SK-N-SH (cell line): ENCODE measurements at regions of chr2 and their contacts with region 1.

Region 1: DNA sequence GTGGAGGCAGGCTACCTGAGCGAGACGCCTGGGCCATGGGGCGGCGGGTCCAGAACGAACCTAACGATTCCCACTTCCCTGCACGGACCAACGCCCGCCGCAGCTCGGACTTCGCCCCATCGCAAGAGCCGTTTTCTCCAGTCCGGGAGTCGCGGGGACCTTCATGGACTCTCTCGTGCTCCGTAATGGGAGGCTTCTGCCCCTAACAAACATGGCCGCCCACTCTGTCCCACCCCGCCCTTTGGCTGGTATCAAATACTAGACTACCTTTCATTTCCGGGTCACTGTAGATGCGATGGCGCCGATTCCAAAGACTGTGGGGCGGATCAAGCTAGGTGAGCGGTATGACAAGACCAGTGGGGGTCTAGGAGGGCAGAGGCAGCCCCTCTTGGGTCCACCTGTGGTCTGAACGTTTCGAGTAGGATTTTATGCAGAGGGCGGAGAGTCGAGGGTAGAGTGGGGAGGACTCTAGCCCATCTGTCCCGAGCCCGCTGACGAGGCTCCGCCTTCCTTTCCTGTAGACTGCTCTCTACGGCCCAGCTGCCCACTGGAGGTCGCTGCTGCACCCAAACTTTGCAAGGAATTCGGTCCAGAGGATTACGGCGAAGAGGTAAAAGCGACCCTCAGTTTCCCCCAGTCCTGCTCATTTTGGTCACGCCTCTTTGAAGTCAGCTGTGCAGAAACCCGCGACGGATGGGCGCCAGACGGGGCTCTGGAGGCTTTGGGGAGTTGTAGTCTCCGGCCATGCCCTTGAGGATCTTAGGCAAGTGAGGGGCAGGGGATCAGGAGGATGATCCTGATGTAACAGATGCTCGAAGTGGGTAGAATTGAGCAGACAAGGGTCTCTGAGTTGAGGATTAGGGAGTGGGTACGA is at the starts of genes CCDC142 and TTC31:
- DNase-seq: peak; percentile 93
- H3K4me3 ChIP-seq: peak within 1 kb of the TSS; percentile 70 to 97
- H3K27ac ChIP-seq: peak within 1 kb of the TSS; percentile 79 to 91
- H3K4me1 ChIP-seq: peaks cover 13 to 16% of the 10 kb centered on the region in 2 experiments; a peak in 3 of 4 replicates
- H3K27me3 ChIP-seq: no peaks in the 10 kb centered on the region
- CTCF ChIP-seq: peak; percentile 93
- EP300 ChIP-seq: no peak
- RAD21 ChIP-seq: peak; percentile 84
- polyA plus RNA-seq, gene CCDC142: 8.7 and 13.1 TPM in 2 replicates
- polyA plus RNA-seq, gene TTC31: 27.9 and 38.0 TPM in 2 replicates

Region 2: DNA sequence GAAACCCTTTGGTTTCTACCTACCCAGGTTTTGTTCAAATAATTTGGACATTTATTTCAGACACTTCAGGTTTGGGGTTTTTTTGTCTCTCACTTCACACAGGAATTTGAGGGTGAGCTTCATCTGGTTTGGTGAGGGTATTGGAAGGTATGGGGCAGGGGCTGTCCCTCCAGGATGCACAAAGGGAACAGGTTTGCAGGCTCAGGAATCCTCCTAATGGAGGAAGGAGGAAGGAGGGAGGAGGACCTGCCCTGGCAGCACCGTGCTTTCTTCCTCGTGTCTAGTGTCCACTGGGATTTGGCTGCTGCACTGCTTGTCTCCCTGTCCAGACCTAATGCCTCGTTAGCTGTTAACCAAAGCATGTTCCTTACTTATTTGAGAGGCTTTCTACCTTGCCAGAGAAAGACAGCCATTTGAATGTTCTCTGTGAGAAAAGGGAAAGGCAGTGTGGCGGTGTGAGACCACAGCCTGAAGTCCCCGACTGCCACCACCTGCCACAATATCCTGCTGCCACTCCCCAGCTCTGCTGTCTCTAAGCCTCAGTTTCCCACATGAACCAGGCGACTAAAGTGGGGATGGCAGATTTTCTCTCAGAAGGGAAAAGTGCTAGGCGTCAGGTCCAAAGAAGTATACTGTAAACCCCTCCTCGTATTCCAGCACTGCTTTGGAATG is 137.6 kb before region 1 on chr2:
- CTCF ChIA-PET with region 1: no interaction called
- POLR2A ChIA-PET with region 1: no interaction called
- DNase-seq: no peak
- H3K4me3 ChIP-seq: no peak overlapping the region
- H3K27ac ChIP-seq: no peak overlapping the region
- H3K4me1 ChIP-seq: peaks cover 0 to 10% of the 10 kb centered on the region in 2 experiments; a peak in 2 of 4 replicates
- H3K27me3 ChIP-seq: no peaks in the 10 kb centered on the region
- CTCF ChIP-seq: no peak
- EP300 ChIP-seq: no peak
- RAD21 ChIP-seq: no peak

Region 3: GRCh38 chr2:74458132-74458925 is 24.7 kb before region 1 on chr2 and contains the start of gene WBP1:
- CTCF ChIA-PET with region 1: interaction called, 9 read pairs
- POLR2A ChIA-PET with region 1: interaction called, 15 read pairs
- DNase-seq: peak; percentile 94
- H3K4me3 ChIP-seq: peak within 1 kb of the TSS; percentile 73 to 98
- H3K27ac ChIP-seq: peak within 1 kb of the TSS; percentile 69 to 99; a peak in 3 of 4 replicates
- H3K4me1 ChIP-seq: peaks cover 14 to 35% of the 10 kb centered on the region in 2 experiments; a peak in 3 of 4 replicates
- H3K27me3 ChIP-seq: no peaks in the 10 kb centered on the region
- CTCF ChIP-seq: no peak
- EP300 ChIP-seq: no peak
- RAD21 ChIP-seq: no peak
- polyA plus RNA-seq, gene WBP1: 184 and 193 TPM in 2 replicates

Region 4: GRCh38 chr2:74498500-74499266 is 15.6 kb after region 1 on chr2:
- CTCF ChIA-PET with region 1: interaction called, 56 read pairs
- POLR2A ChIA-PET with region 1: interaction called, 19 read pairs
- DNase-seq: peak; percentile 49
- H3K4me3 ChIP-seq: peak overlapping the region in 1 of 2 experiments; percentile 24; a peak in 2 of 4 replicates
- H3K27ac ChIP-seq: no peak overlapping the region
- H3K4me1 ChIP-seq: peaks cover 0 to 22% of the 10 kb centered on the region in 2 experiments; a peak in 1 of 4 replicates
- H3K27me3 ChIP-seq: no peaks in the 10 kb centered on the region
- CTCF ChIP-seq: no peak
- EP300 ChIP-seq: no peak
- RAD21 ChIP-seq: no peak

Region 5: DNA sequence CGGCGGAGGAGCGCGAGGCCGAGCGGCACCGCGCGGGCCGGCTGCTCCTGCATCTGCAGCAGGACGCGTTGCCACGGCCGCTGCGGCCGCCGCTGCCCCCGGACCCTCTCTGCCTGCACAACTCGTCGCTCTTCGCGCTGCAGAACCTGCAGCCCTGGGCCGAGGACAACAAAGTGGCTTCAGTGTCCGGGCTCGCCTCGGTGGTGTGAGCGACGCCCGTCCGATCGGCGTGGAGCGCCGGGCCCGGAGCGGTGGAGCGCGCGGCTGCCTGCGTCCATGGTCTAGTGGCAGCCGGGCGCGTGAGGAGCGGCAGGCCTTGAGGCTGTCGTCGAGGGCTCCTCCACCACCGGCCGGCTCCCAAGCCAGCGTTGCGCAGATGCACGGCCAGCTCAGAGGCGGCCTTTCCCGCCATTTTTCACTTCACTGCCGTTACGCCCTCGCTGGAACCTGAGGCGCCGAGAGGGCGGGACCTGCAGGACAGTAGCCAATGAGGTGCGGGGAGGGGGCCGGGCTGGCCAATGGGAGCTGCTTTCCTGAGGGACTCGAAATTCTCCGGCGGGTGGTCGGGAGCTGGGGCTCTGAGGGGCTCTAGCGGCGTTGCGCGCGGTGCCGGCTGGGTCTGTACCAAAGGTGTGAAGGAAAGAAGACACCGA is 33.1 kb after region 1 on chr2:
- CTCF ChIA-PET with region 1: interaction called, 11 read pairs
- POLR2A ChIA-PET with region 1: interaction called, 5 read pairs
- DNase-seq: peak; percentile 72
- H3K4me3 ChIP-seq: no peak overlapping the region; a peak in 1 of 4 replicates
- H3K27ac ChIP-seq: no peak overlapping the region
- H3K4me1 ChIP-seq: peaks cover 9 to 18% of the 10 kb centered on the region in 2 experiments; a peak in 1 of 4 replicates
- H3K27me3 ChIP-seq: no peaks in the 10 kb centered on the region
- CTCF ChIP-seq: no peak
- EP300 ChIP-seq: no peak
- RAD21 ChIP-seq: no peak

Region 6: GRCh38 chr2:74597410-74597809 is 114.4 kb after region 1 on chr2:
- CTCF ChIA-PET with region 1: interaction called, 12 read pairs
- POLR2A ChIA-PET with region 1: no interaction called
- DNase-seq: peak; percentile 31
- H3K4me3 ChIP-seq: no peak overlapping the region
- H3K27ac ChIP-seq: peak overlapping the region; percentile 39 to 86; a peak in 3 of 4 replicates
- H3K4me1 ChIP-seq: peaks cover under 1 to 5% of the 10 kb centered on the region in 2 experiments; a peak in 3 of 4 replicates
- H3K27me3 ChIP-seq: no peaks in the 10 kb centered on the region; the same call in 1 of the 2 replicates
- CTCF ChIP-seq: no peak
- EP300 ChIP-seq: peak; percentile 33 to 62
- RAD21 ChIP-seq: no peak